A673 (cell line): ENCODE measurements at regions of chr15 and their contacts with region 1.

Region 1: DNA sequence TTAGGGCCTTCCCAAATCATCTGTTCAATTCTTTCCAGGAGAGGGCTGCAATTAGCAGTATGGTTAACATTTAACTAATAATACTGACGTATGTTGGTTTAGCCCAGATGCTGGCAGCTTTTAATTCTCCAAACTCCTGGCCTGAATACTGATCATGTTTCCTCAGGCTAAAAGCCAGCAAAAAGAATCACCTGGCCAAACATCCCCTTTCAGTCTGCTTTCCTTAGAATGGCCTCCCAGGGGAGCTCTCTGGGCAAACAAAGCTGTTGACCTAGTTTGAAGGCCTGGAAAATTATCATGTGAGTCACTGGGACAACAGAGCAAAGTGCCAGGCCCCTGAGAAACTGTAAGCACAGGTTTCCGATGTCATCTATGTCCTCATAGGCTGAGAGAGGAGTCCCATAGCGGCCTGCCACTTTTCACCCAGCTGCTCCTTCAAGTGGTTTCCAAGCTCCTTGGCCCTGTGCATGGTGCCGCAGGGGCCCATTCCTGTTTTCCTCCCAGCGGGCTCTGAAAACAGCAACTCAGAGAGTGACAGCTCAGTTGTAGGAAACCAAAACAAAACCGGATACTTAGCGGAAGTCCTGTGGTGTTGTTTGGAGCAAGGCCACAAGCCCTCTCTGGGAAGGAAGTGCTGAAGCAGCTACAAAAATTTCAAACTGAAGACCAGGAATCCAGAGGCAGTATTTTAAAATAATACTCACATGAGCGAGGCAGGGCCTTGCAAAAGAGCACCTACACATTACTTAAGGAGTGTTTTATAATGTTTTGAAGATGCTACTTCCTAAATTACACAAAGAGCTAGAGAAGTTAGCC is 36.5 kb upstream of the RAB11A start:
- DNase-seq: peak; percentile 98
- H3K4me3 ChIP-seq: no peak overlapping the region
- H3K27ac ChIP-seq: peak overlapping the region; percentile 82
- H3K4me1 ChIP-seq: peaks cover 35% of the 10 kb centered on the region
- H3K27me3 ChIP-seq: no peaks in the 10 kb centered on the region
- CTCF ChIP-seq: peak; percentile 6; the same call in 1 of the 2 replicates

Region 2: GRCh38 chr15:65598468-65598867 is 234.3 kb before region 1 on chr15:
- CTCF ChIA-PET with region 1: no interaction called
- POLR2A ChIA-PET with region 1: no interaction called
- intact Hi-C with region 1: no loop called
- DNase-seq: no peak
- H3K4me3 ChIP-seq: no peak overlapping the region
- H3K27ac ChIP-seq: peak overlapping the region; percentile 7
- H3K4me1 ChIP-seq: no peaks in the 10 kb centered on the region
- H3K27me3 ChIP-seq: no peaks in the 10 kb centered on the region
- CTCF ChIP-seq: no peak

Region 3: DNA sequence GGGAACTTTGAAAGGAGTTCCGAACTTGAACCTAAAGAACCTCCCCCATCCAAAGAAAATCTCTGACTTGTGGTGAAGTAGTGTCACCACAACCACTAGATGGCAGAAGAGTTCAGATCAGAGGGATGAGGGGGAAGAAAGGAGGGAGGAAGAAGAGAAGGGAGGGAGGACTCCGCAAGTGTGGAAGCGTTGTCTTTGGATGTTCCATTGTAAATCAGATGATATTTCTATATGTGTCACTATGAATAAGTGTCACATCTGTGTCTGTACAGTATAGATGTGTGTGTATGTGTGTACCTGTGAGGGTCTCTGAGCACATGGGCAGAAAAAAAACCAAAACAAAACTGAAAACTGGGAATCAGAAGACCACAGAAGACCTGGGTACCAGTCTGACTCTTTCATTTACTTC is 194.1 kb before region 1 on chr15:
- CTCF ChIA-PET with region 1: interaction called, 5 read pairs
- POLR2A ChIA-PET with region 1: no interaction called
- intact Hi-C with region 1: loop called (anchors 10 kb)
- DNase-seq: peak; percentile 89
- H3K4me3 ChIP-seq: peak overlapping the region; percentile 9
- H3K27ac ChIP-seq: no peak overlapping the region
- H3K4me1 ChIP-seq: no peaks in the 10 kb centered on the region
- H3K27me3 ChIP-seq: no peaks in the 10 kb centered on the region
- CTCF ChIP-seq: peak; percentile 89

Region 4: DNA sequence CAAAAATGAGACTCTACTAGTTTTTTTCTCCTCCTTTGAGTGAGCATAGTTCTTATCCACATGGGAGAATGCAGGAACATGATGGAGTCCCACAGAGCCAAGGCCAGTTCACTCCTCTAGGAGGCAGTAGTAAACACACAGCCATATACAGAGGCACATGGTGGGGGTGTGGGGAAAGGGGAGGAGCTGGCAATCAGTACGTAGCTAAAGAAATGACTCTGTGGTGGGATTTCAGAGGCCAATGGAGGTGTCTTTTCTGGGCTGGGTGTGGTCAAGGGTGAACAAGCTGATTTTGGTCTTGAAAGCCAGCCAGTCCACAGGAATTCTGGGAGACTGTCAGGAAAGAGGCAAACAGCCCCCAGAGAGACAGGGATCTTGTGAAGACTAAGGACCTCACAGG is 29.9 kb after region 1 on chr15:
- CTCF ChIA-PET with region 1: interaction called, 12 read pairs
- POLR2A ChIA-PET with region 1: no interaction called
- intact Hi-C with region 1: no loop called
- DNase-seq: peak; percentile 90
- H3K4me3 ChIP-seq: no peak overlapping the region
- H3K27ac ChIP-seq: no peak overlapping the region
- H3K4me1 ChIP-seq: no peaks in the 10 kb centered on the region
- H3K27me3 ChIP-seq: no peaks in the 10 kb centered on the region
- CTCF ChIP-seq: peak; percentile 77

Region 5: GRCh38 chr15:66025015-66025452 is 192.3 kb after region 1 on chr15:
- CTCF ChIA-PET with region 1: no interaction called
- POLR2A ChIA-PET with region 1: no interaction called
- intact Hi-C with region 1: no loop called
- DNase-seq: no peak
- H3K4me3 ChIP-seq: no peak overlapping the region
- H3K27ac ChIP-seq: no peak overlapping the region
- H3K4me1 ChIP-seq: no peaks in the 10 kb centered on the region
- H3K27me3 ChIP-seq: peaks cover 6% of the 10 kb centered on the region
- CTCF ChIP-seq: no peak

Region 6: DNA sequence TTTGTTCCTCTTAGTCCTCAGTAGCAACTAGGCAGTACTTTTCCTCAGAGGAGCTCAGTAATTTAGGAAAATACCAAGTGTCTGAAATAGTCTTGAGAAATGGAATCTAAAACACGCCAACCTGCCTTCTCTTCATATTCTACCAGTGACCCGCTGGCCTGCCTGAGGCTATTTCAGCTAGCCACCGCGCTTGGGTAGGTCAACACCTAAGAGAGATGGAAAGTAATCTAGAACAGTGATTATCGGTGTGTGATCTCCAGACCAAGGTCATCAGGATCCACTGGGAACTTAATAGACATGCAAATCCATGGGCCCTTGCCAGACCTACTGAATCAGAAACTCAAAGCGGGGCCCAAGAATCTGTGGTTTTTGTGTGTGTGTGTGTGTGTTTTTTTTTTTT is 725.5 kb after region 1 on chr15:
- CTCF ChIA-PET with region 1: no interaction called
- POLR2A ChIA-PET with region 1: no interaction called
- intact Hi-C with region 1: no loop called
- DNase-seq: no peak
- H3K4me3 ChIP-seq: no peak overlapping the region
- H3K27ac ChIP-seq: no peak overlapping the region
- H3K4me1 ChIP-seq: no peaks in the 10 kb centered on the region
- H3K27me3 ChIP-seq: no peaks in the 10 kb centered on the region
- CTCF ChIP-seq: no peak